B cell (primary cell): ENCODE measurements at regions of chr14 and their contacts with region 1.

Region 1: GRCh38 chr14:102694530-102695166 is 82.6 kb upstream of the TRAF3 start:
- DNase-seq: peak; percentile 81
- ATAC-seq: peak; percentile 64
- H3K4me3 ChIP-seq: no peak overlapping the region
- H3K4me3 Mint-ChIP-seq: no peak overlapping the region
- H3K27ac ChIP-seq: no peak overlapping the region
- H3K27ac Mint-ChIP-seq: no peak overlapping the region
- H3K4me1 ChIP-seq: peaks cover 8 to 10% of the 10 kb centered on the region in 2 donors
- H3K4me1 Mint-ChIP-seq: peaks cover 36% of the 10 kb centered on the region
- H3K27me3 ChIP-seq: no peaks in the 10 kb centered on the region
- H3K27me3 Mint-ChIP-seq: no peaks in the 10 kb centered on the region
- CTCF ChIP-seq: peak; percentile 78

Region 2: GRCh38 chr14:102437997-102438915 is 256.4 kb before region 1 on chr14:
- CTCF ChIA-PET with region 1: interaction called, 10 read pairs
- POLR2A ChIA-PET with region 1: no interaction called
- intact Hi-C with region 1: no loop called
- DNase-seq: peak; percentile 80
- ATAC-seq: peak; percentile 58
- H3K4me3 ChIP-seq: no peak overlapping the region
- H3K4me3 Mint-ChIP-seq: peak overlapping the region; percentile 13
- H3K27ac ChIP-seq: no peak overlapping the region
- H3K27ac Mint-ChIP-seq: no peak overlapping the region
- H3K4me1 ChIP-seq: peaks cover 4 to 6% of the 10 kb centered on the region in 2 donors
- H3K4me1 Mint-ChIP-seq: peaks cover 3% of the 10 kb centered on the region
- H3K27me3 ChIP-seq: no peaks in the 10 kb centered on the region
- H3K27me3 Mint-ChIP-seq: no peaks in the 10 kb centered on the region
- CTCF ChIP-seq: peak; percentile 81

Region 3: GRCh38 chr14:102474934-102475333 is 219.7 kb before region 1 on chr14:
- CTCF ChIA-PET with region 1: no interaction called
- POLR2A ChIA-PET with region 1: no interaction called
- intact Hi-C with region 1: no loop called
- DNase-seq: no peak
- ATAC-seq: no peak
- H3K4me3 ChIP-seq: no peak overlapping the region
- H3K4me3 Mint-ChIP-seq: no peak overlapping the region
- H3K27ac ChIP-seq: no peak overlapping the region
- H3K27ac Mint-ChIP-seq: no peak overlapping the region
- H3K4me1 ChIP-seq: no peaks in the 10 kb centered on the region
- H3K4me1 Mint-ChIP-seq: no peaks in the 10 kb centered on the region
- H3K27me3 ChIP-seq: no peaks in the 10 kb centered on the region
- H3K27me3 Mint-ChIP-seq: no peaks in the 10 kb centered on the region
- CTCF ChIP-seq: no peak

Region 4: DNA sequence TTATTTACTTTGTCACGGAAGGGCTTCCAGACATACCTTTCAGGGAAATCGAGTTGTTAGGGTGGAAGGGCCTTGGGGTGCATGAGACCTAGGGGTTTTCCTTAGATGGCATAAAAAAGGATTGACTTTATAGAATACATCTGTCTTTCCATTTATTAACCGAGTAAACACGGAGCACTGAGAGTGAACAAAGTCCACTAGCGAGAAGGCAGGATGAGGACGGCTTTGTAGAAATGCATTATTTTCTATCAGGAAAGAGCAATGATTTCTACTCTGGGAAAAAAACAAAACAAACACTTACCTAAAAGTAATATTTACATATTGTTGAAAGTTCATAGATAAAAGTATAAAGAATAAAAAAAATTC is 10.4 kb before region 1 on chr14:
- CTCF ChIA-PET with region 1: interaction called, 11 read pairs
- POLR2A ChIA-PET with region 1: no interaction called
- intact Hi-C with region 1: no loop called
- DNase-seq: no peak
- ATAC-seq: no peak
- H3K4me3 ChIP-seq: no peak overlapping the region
- H3K4me3 Mint-ChIP-seq: no peak overlapping the region
- H3K27ac ChIP-seq: no peak overlapping the region
- H3K27ac Mint-ChIP-seq: no peak overlapping the region
- H3K4me1 ChIP-seq: peaks cover 8 to 14% of the 10 kb centered on the region in 2 donors
- H3K4me1 Mint-ChIP-seq: peaks cover 27% of the 10 kb centered on the region
- H3K27me3 ChIP-seq: no peaks in the 10 kb centered on the region
- H3K27me3 Mint-ChIP-seq: no peaks in the 10 kb centered on the region
- CTCF ChIP-seq: no peak

Region 5: GRCh38 chr14:102805371-102806246 is 111.0 kb after region 1 on chr14:
- CTCF ChIA-PET with region 1: interaction called, 11 read pairs
- POLR2A ChIA-PET with region 1: no interaction called
- intact Hi-C with region 1: no loop called
- DNase-seq: peak; percentile 61
- ATAC-seq: peak; percentile 55
- H3K4me3 ChIP-seq: peak overlapping the region in 3 of 5 experiments; percentile 0 to 49 (median 13)
- H3K4me3 Mint-ChIP-seq: peak overlapping the region; percentile 89
- H3K27ac ChIP-seq: peak overlapping the region; percentile 82 to 85
- H3K27ac Mint-ChIP-seq: peak overlapping the region; percentile 97
- H3K4me1 ChIP-seq: peaks cover 70 to 77% of the 10 kb centered on the region in 2 donors
- H3K4me1 Mint-ChIP-seq: peaks cover 75% of the 10 kb centered on the region
- H3K27me3 ChIP-seq: no peaks in the 10 kb centered on the region
- H3K27me3 Mint-ChIP-seq: no peaks in the 10 kb centered on the region
- CTCF ChIP-seq: no peak

Region 6: DNA sequence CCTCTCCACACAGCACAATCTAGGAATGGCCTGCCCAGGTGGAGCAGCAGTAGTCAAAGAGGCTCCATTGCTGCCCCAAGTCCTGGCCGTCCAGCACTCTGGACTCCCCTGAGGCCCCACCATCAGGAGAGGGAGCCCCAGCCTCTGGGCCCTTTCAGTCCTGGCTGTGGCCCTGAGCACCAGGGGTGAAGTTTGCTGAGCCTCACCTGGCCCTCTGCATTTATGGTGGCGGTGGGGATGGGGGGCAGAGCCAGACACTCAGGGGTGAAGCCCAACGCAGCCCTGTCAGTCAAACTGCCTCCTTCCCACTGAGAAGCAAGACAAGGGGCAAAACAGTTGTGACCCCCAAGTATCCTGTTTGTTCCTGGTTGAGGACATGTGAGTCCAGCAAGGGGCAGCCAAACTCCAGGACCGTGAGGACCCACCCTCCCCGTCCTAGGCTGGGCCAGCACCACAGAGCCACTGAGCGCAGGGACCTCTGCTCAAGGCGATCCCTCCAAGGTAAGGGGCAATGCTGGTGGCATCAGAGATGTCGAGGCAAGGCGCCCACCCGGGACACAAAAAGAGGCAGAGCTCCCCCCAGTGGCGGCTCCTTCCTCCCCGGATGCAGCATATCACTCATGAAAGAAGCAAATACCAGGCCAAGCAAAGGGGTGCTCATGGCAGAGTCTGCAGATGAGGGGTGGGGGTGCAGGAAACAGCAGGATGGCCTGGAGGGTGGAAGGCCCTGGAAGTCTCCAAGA is 223.0 kb after region 1 on chr14:
- CTCF ChIA-PET with region 1: interaction called, 59 read pairs
- POLR2A ChIA-PET with region 1: no interaction called
- intact Hi-C with region 1: loop called (anchors 1 kb)
- DNase-seq: peak; percentile 79
- ATAC-seq: peak; percentile 28
- H3K4me3 ChIP-seq: peak overlapping the region in 1 of 5 experiments; percentile 16
- H3K4me3 Mint-ChIP-seq: peak overlapping the region; percentile 33
- H3K27ac ChIP-seq: peak overlapping the region; percentile 55 to 68
- H3K27ac Mint-ChIP-seq: peak overlapping the region; percentile 80
- H3K4me1 ChIP-seq: peaks cover 54 to 58% of the 10 kb centered on the region in 2 donors
- H3K4me1 Mint-ChIP-seq: peaks cover 48% of the 10 kb centered on the region
- H3K27me3 ChIP-seq: peaks cover 0 to 4% (median under 1%) of the 10 kb centered on the region in 4 experiments
- H3K27me3 Mint-ChIP-seq: no peaks in the 10 kb centered on the region
- CTCF ChIP-seq: peak; percentile 73

Region 7: GRCh38 chr14:103078093-103078749 is 383.6 kb after region 1 on chr14:
- CTCF ChIA-PET with region 1: interaction called, 10 read pairs
- POLR2A ChIA-PET with region 1: no interaction called
- intact Hi-C with region 1: loop called (anchors 5 kb)
- DNase-seq: peak; percentile 86
- ATAC-seq: peak; percentile 71
- H3K4me3 ChIP-seq: no peak overlapping the region
- H3K4me3 Mint-ChIP-seq: no peak overlapping the region
- H3K27ac ChIP-seq: no peak overlapping the region
- H3K27ac Mint-ChIP-seq: no peak overlapping the region
- H3K4me1 ChIP-seq: peaks cover 10 to 22% of the 10 kb centered on the region in 2 donors
- H3K4me1 Mint-ChIP-seq: peaks cover 5% of the 10 kb centered on the region
- H3K27me3 ChIP-seq: peaks cover 0 to 11% (median 5%) of the 10 kb centered on the region in 4 experiments
- H3K27me3 Mint-ChIP-seq: no peaks in the 10 kb centered on the region
- CTCF ChIP-seq: peak; percentile 80

Region 8: GRCh38 chr14:103292426-103293374 is 598.1 kb after region 1 on chr14:
- CTCF ChIA-PET with region 1: interaction called, 16 read pairs
- POLR2A ChIA-PET with region 1: no interaction called
- intact Hi-C with region 1: loop called (anchors 2 kb)
- DNase-seq: peak; percentile 79
- ATAC-seq: peak; percentile 92
- H3K4me3 ChIP-seq: no peak overlapping the region
- H3K4me3 Mint-ChIP-seq: no peak overlapping the region
- H3K27ac ChIP-seq: no peak overlapping the region
- H3K27ac Mint-ChIP-seq: no peak overlapping the region
- H3K4me1 ChIP-seq: peaks cover 0 to 5% of the 10 kb centered on the region in 2 donors
- H3K4me1 Mint-ChIP-seq: peaks cover 1% of the 10 kb centered on the region
- H3K27me3 ChIP-seq: peaks cover 0 to 21% (median 0%) of the 10 kb centered on the region in 4 experiments
- H3K27me3 Mint-ChIP-seq: peaks cover 19% of the 10 kb centered on the region
- CTCF ChIP-seq: peak; percentile 85